Activated CD4-positive, alpha-beta memory T cell treated with anti-CD3 and anti-CD28 coated beads, Interleukin-2, amount 10 ng/mL, durations not matched to agents 7 days and 5 days (primary cell): ENCODE measurements at regions of chr20 and their contacts with region 1.

Region 1: GRCh38 chr20:2752567-2753460 is 47.6 kb downstream of the CPXM1 start:
- DNase-seq: peak; percentile 48
- H3K4me3 Mint-ChIP-seq: peak overlapping the region; percentile 74
- H3K27ac Mint-ChIP-seq: no peak overlapping the region
- H3K4me1 Mint-ChIP-seq: peaks cover 27% of the 10 kb centered on the region
- H3K27me3 Mint-ChIP-seq: peaks cover 63% of the 10 kb centered on the region

Region 2: DNA sequence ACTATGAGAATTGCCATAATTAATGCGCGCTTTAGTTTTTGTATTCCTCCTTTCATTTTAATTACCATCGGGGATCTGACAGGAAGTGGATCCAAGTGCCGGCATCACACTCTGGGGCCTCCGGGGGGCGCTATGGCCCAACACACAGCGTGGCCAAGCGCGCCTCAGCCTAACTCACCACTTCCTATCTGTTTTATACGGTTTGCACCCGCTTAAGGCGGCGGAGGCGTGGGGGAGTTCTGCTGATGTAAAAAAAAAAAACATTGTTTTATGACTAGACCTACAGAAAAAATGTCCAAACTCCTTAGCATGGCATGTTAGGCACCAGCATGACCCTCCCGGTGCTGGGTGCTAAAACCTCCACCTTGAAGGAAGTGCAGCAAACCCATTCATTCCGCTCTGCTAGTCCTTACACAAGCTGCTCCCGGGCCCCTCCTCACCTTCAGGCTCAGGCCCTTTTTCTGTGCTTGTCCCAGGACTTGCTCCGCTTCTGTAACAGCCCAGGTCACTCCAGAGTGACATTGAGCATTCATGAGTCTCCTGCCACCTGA is 64.7 kb before region 1 on chr20:
- CTCF ChIA-PET with region 1: interaction called, 13 read pairs
- POLR2A ChIA-PET with region 1: interaction called, 6 read pairs
- DNase-seq: peak; percentile 88
- H3K4me3 Mint-ChIP-seq: peak overlapping the region; percentile 32
- H3K27ac Mint-ChIP-seq: peak overlapping the region; percentile 21
- H3K4me1 Mint-ChIP-seq: peaks cover 26% of the 10 kb centered on the region
- H3K27me3 Mint-ChIP-seq: peaks cover 36% of the 10 kb centered on the region

Region 3: GRCh38 chr20:2713285-2713684 is 39.5 kb before region 1 on chr20:
- CTCF ChIA-PET with region 1: no interaction called
- POLR2A ChIA-PET with region 1: no interaction called
- DNase-seq: no peak
- H3K4me3 Mint-ChIP-seq: no peak overlapping the region
- H3K27ac Mint-ChIP-seq: no peak overlapping the region
- H3K4me1 Mint-ChIP-seq: no peaks in the 10 kb centered on the region
- H3K27me3 Mint-ChIP-seq: peaks cover 4% of the 10 kb centered on the region

Region 4: GRCh38 chr20:2729251-2729713 is 23.5 kb before region 1 on chr20:
- CTCF ChIA-PET with region 1: interaction called, 15 read pairs
- POLR2A ChIA-PET with region 1: no interaction called
- DNase-seq: no peak
- H3K4me3 Mint-ChIP-seq: no peak overlapping the region
- H3K27ac Mint-ChIP-seq: peak overlapping the region; percentile 50
- H3K4me1 Mint-ChIP-seq: peaks cover 7% of the 10 kb centered on the region
- H3K27me3 Mint-ChIP-seq: peaks cover 27% of the 10 kb centered on the region

Region 5: DNA sequence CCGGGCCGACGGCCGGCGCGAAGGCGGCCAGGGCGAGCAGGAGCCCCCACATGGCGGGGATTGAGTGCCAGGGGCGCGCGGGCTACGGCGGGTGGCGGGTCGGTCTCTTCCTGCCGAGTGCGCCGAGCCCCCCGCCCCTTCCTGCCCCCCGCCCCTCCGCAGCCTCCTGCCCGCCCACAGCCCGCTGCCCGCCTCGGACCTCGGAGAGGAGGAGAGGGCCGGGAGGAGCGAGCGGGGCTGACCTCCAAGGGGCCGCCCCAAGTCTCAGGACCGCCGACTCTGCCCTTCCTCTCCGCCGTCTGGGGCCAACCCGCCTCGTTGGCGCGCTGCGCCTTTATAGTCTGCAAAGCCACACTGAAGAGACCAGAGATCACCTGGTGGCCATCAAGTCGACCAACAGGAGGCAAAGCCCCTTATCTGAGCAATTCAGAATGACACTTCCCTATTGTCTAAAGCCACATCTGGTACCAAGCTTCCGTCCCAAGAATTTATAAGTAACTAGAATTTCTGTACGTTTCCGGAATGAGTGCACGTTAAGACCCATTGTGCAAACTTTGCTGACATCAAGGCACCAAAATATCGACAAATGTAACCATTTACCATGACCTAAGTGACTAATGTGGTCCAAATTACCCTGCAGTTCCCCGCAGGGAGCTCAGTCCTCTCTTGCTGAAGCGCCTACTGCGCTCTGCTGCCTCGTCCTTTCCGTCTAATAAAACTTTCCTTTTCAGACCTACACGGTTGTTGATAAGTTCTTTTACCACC is 47.9 kb after region 1 on chr20 and contains the start of gene CPXM1:
- CTCF ChIA-PET with region 1: no interaction called
- POLR2A ChIA-PET with region 1: no interaction called
- DNase-seq: no peak
- H3K4me3 Mint-ChIP-seq: peak within 1 kb of the TSS; percentile 65
- H3K27ac Mint-ChIP-seq: peak within 1 kb of the TSS; percentile 29
- H3K4me1 Mint-ChIP-seq: peaks cover 22% of the 10 kb centered on the region
- H3K27me3 Mint-ChIP-seq: peaks cover 63% of the 10 kb centered on the region
- total RNA-seq, gene CPXM1: 0.20 to 0.33 TPM

Region 6: GRCh38 chr20:3190681-3191111 is 437.9 kb after region 1 on chr20:
- CTCF ChIA-PET with region 1: no interaction called
- POLR2A ChIA-PET with region 1: no interaction called
- DNase-seq: no peak
- H3K4me3 Mint-ChIP-seq: no peak overlapping the region
- H3K27ac Mint-ChIP-seq: no peak overlapping the region
- H3K4me1 Mint-ChIP-seq: peaks cover 2% of the 10 kb centered on the region
- H3K27me3 Mint-ChIP-seq: no peaks in the 10 kb centered on the region